Activated naive CD4-positive, alpha-beta T cell treated with anti-CD3 and anti-CD28 coated beads for 36 hours (primary cell): ENCODE measurements at regions of chr19 and their contacts with region 1.

Region 1: DNA sequence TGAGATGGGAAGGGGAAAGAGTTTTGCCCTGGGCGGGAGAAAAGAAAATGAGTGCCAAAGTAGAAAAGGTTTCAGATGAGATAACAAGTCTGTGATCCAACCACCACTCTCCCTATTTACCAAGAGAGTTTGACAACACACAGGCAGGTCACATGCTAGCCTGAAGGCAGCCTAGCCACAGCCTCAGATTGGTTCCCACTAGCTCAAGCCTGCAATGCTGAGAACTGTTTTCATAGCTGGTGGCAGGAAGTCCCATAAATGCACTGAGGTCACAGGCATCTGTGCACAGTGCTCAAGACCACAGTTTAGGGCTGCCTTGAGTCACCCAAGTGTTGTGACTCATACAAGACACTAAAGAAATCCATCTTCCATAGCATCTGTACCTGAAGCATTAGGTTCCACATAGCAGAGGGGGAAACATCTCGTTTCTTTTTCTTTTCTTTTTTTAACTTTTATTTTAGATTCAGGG is 18.5 kb upstream of the POP4 start:
- DNase-seq: peak; percentile 84
- H3K4me3 Mint-ChIP-seq: no peak overlapping the region
- H3K27ac Mint-ChIP-seq: peak overlapping the region; percentile 76
- H3K4me1 Mint-ChIP-seq: peaks cover 18% of the 10 kb centered on the region
- H3K27me3 Mint-ChIP-seq: peaks cover 39% of the 10 kb centered on the region

Region 2: GRCh38 chr19:29546583-29547190 is 40.9 kb before region 1 on chr19:
- CTCF ChIA-PET with region 1: no interaction called
- intact Hi-C with region 1: no loop called
- DNase-seq: no peak
- H3K4me3 Mint-ChIP-seq: no peak overlapping the region
- H3K27ac Mint-ChIP-seq: no peak overlapping the region
- H3K4me1 Mint-ChIP-seq: no peaks in the 10 kb centered on the region
- H3K27me3 Mint-ChIP-seq: peaks cover 20% of the 10 kb centered on the region

Region 3: DNA sequence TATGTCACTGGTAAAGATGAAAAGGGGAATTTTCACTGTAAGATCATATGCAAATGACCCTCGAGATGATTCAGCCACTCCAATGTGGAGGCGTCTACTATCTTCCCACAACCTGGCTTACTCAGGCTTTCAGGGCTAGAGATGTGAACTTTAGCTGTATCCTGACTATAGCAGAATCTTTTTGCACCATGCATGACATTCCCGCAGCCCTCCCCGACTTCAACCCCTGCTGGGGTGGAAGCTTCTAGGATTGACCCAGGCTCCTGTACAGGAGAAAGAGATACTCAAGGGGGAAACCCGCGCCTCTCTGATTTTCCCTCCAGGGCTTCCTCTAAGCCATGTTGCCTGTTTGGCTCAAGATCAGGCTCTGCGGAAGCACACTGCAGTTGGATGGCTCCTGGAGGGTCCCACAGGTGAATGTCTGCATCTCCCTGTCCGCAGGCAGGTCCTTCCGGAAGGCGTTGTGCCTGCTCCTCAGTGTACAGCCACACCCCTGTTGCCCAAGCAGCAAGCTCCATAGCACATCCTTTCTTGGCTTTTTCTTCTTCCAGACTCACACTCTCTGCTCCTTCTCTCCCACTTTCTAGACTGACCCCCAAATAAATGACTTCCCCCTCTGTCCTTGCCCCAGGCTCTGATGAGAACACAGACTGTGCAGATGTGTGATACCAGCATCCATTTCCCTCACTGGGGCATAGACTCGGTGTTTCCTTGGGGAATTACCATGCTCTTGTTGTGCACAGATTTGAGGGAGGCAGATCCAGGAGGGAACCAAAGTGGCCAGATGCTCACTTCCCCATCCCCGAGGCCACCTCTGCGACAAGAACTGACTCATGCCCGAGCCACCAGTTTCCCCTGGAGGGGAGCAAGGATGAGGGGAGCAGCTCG is 10.5 kb before region 1 on chr19:
- CTCF ChIA-PET with region 1: interaction called, 4 read pairs
- intact Hi-C with region 1: loop called (anchors 1 kb)
- DNase-seq: peak; percentile 70
- H3K4me3 Mint-ChIP-seq: no peak overlapping the region
- H3K27ac Mint-ChIP-seq: no peak overlapping the region
- H3K4me1 Mint-ChIP-seq: peaks cover 24% of the 10 kb centered on the region
- H3K27me3 Mint-ChIP-seq: peaks cover 50% of the 10 kb centered on the region

Region 4: DNA sequence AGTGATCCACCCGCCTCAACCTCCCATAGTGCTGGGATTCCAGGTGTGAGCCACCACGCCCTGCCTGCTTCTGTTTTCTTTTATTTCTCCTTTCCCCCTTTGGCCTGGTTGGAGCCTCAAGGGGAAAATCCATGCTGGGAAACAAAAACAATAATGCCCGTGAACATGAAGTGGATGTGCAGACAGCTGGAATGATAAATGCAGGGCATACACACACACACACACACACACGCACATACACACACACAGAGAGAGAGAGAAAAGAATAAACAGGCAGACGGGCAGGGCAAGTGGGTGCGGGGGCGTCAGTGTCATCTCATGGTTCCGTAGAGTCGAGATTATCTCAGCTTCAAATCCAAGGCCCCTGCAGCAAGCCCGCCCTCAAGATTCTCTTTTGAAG is 73.3 kb after region 1 on chr19:
- CTCF ChIA-PET with region 1: no interaction called
- intact Hi-C with region 1: no loop called
- DNase-seq: peak; percentile 56
- H3K4me3 Mint-ChIP-seq: no peak overlapping the region
- H3K27ac Mint-ChIP-seq: peak overlapping the region; percentile 30
- H3K4me1 Mint-ChIP-seq: peaks cover 39% of the 10 kb centered on the region
- H3K27me3 Mint-ChIP-seq: no peaks in the 10 kb centered on the region